H1 (cell line): ENCODE measurements at regions of chr1 and their contacts with region 1.

Region 1: DNA sequence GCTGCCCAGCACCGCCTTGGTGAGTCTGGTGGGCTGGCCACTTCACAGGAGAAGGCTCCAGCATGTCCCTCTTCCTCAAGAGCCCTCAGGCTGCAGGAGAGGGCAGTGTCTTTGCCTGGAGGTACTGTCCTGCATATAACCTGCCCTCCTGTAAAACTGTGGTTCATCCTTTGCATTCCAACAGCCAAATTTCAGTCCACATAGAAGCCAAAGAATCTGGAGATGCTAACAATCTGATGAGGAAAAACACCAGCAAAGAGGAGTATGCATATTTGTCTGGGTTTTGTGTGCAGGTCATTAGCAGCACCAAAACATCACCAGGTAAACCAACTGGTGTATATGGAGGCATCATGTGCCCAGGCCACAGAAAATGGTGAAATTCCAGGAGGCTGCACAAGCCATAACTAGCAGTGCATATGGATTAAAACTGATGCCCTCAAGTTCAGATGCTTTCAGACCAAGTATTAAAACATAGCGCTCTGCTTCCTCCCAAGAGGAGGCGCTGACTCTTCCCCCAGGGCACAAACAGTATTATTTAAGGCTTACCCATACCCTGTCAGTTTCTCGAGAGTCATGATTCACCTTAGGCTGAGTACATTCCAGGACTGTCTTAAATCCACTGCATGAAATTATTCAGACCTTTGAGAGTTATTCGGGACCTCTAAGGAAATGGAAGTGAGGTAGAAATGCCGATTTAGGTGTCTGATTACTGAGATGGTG is 150.5 kb upstream of the COA6 start:
- DNase-seq: no peak
- H3K4me3 ChIP-seq: no peak overlapping the region
- H3K27ac ChIP-seq: no peak overlapping the region
- H3K4me1 ChIP-seq: peaks cover 2 to 10% (median 8%) of the 10 kb centered on the region in 4 experiments; a peak in 6 of 7 replicates
- H3K27me3 ChIP-seq: no peaks in the 10 kb centered on the region; a peak in 1 of 7 replicates
- CTCF ChIP-seq: no peak
- EP300 ChIP-seq: no peak
- POLR2A ChIP-seq: no peak
- RAD21 ChIP-seq: no peak

Region 2: GRCh38 chr1:234197839-234198238 is 24.9 kb before region 1 on chr1:
- CTCF ChIA-PET with region 1: no interaction called
- POLR2A ChIA-PET with region 1: no interaction called
- DNase-seq: no peak
- H3K4me3 ChIP-seq: no peak overlapping the region
- H3K27ac ChIP-seq: no peak overlapping the region
- H3K4me1 ChIP-seq: no peaks in the 10 kb centered on the region
- H3K27me3 ChIP-seq: no peaks in the 10 kb centered on the region
- CTCF ChIP-seq: no peak
- EP300 ChIP-seq: no peak
- POLR2A ChIP-seq: no peak
- RAD21 ChIP-seq: no peak

Region 3: GRCh38 chr1:234235434-234235881 is 12.7 kb after region 1 on chr1:
- CTCF ChIA-PET with region 1: interaction called, 29 read pairs
- POLR2A ChIA-PET with region 1: no interaction called
- DNase-seq: no peak
- H3K4me3 ChIP-seq: no peak overlapping the region
- H3K27ac ChIP-seq: no peak overlapping the region
- H3K4me1 ChIP-seq: peaks cover 0 to 3% (median 0%) of the 10 kb centered on the region in 4 experiments; a peak in 1 of 7 replicates
- H3K27me3 ChIP-seq: no peaks in the 10 kb centered on the region; a peak in 1 of 7 replicates
- CTCF ChIP-seq: no peak
- EP300 ChIP-seq: no peak
- POLR2A ChIP-seq: no peak
- RAD21 ChIP-seq: no peak